ENCODE measurements at regions of chr11 and their contacts with region 1.

Region 1: GRCh38 chr11:12430955-12431354 is 53.6 kb downstream of the PARVA start:
- DNase-seq: peak; percentile 69
- H3K4me3 ChIP-seq: no peak overlapping the region
- H3K27ac ChIP-seq: peak overlapping the region; percentile 60 to 75
- H3K4me1 ChIP-seq: peaks cover 6% of the 10 kb centered on the region
- H3K27me3 ChIP-seq: no peaks in the 10 kb centered on the region
- CTCF ChIP-seq: no peak
- POLR2A ChIP-seq: no peak

Region 2: DNA sequence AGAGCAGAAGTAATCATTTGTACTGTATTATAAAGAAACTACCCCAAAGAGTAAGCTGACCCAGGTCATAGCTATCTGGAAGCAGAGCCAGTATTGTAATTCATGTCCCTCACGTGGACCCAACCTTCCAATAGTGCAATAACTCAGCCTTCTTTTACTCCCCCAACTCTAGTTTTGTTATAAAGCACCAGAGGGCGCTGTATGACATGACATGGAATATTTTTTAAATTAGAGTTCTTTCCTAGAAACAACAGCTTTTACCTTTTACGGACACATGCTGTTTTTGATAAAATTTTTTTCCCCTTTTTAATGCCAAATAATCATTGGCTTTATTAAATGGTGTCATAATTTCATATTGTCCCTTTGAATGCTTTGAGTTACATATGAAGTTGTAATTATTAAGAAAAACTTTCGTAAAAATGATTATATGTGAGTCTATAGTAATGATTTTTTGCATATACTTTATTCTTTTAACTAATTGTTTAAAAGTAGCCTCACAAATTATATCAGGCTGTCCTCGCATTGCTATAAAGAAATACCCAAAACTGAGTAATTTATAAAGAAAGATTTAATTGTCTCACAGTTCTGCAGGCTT is 499.4 kb before region 1 on chr11:
- intact Hi-C with region 1: no loop called
- DNase-seq: peak; percentile 12
- H3K4me3 ChIP-seq: no peak overlapping the region
- H3K27ac ChIP-seq: no peak overlapping the region
- H3K4me1 ChIP-seq: no peaks in the 10 kb centered on the region
- H3K27me3 ChIP-seq: no peaks in the 10 kb centered on the region
- CTCF ChIP-seq: peak; percentile 14 to 74 (median 59)
- POLR2A ChIP-seq: no peak

Region 3: DNA sequence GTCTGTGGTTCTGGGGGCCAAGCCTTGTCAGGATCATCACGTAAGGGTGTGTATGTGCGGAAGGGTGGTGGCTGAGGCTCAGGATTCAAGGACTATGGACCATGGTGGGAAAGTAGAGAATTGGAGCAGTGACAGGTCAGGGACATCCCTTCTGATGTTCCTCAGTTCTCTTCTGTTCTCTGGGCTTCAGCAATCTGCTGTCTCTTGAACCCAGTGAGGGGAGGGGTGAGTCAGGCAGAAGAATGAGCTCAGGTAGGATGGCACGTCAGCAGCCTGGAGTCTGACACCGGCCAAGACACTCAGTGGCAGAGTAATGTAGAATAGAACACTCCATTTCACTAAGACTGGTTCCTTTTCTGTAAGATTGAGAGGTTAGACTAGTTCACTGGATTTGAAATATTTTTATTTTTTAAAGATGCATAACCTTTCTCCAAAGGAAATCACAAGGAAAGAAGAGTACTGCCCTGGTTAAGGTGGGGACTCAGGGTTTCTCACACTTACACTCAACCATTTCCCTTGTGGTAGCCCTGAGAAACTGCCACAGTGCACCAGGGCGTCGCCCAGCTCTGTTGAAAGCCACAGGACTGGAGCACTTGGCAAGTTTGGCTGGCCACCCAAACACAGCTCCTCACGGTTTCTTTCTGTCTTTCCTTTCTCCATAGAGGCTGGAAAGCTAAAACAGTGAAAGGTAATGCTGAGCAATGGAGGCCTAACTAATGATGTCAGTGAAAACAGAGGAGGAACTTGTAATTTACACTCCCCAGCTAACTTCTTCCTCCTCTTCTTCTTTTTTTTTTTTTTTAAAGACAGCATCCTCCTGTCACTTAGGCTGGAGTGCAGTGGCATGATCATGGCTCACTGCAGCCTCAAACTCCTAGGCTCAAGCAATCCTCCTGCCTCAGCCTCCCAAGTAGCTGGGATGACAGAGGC is 343.6 kb before region 1 on chr11:
- intact Hi-C with region 1: loop called (anchors 10 kb)
- DNase-seq: no peak
- H3K4me3 ChIP-seq: no peak overlapping the region
- H3K27ac ChIP-seq: peak overlapping the region; percentile 71 to 77
- H3K4me1 ChIP-seq: no peaks in the 10 kb centered on the region
- H3K27me3 ChIP-seq: no peaks in the 10 kb centered on the region
- CTCF ChIP-seq: no peak
- POLR2A ChIP-seq: no peak

Region 4: GRCh38 chr11:12182676-12183541 is 248.0 kb before region 1 on chr11:
- intact Hi-C with region 1: no loop called
- DNase-seq: no peak
- H3K4me3 ChIP-seq: no peak overlapping the region
- H3K27ac ChIP-seq: no peak overlapping the region
- H3K4me1 ChIP-seq: no peaks in the 10 kb centered on the region
- H3K27me3 ChIP-seq: no peaks in the 10 kb centered on the region
- CTCF ChIP-seq: no peak
- POLR2A ChIP-seq: no peak

Measured in prostate gland (tissue), 2 donors.